ENCODE measurements at regions of chr1 and their contacts with region 1.

Region 1: DNA sequence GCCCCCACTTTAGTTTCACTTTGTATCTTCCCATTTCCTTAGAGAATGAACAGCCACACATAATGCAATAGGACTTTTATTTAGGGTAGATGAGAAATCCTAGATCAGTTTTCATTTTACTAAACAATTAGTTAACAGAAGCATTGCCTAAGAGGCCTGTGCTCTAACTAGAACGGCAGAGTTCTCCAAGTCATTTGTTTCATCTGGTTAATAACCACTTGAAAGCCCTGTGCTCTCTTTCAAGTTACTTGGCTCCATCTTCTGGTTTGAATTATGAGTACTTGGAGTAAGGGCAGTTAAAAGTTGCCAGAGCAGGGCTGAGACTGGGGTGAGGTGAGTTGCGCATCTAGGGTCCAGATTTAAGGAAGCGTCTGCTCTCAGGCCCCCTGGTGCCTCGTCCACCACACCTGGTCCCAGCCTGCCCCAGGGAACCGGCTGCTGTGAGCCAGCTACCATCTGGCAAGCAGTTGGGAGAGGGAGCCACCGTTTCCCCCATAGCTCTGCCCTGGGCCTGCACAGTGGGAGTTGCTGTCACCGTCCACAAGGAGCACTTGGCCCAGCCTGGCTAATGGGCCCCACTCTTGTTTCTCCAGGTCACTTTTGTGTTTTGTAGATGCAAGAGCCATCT is 18.1 kb upstream of the SLC44A3 start:
- DNase-seq: peak; percentile 31 to 86
- H3K4me3 ChIP-seq: no peak overlapping the region
- CTCF ChIP-seq: no peak
- POLR2A ChIP-seq: no peak

Region 2: DNA sequence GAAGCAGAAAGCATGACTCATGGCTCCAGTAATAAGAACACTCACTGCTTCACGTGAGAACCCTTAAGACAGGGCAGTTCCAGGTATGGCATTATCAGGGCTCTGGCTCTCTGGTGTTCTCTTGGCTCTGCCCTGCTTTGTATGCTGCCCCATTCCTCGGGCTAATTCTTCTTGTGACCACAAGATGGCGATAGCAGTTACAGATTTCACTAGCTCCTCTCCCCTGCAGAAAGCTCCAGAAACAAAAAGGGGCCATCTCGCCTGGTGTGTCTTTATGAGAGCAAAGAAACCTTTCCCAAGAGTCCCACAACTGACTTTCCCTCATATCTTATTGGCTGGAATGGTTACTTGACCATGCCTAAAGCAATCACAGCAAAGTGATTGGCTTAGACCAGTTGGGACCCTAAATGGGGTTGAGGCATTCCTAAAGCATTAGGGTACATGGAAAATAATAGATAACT is 320.5 kb before region 1 on chr1:
- intact Hi-C with region 1: loop called (anchors 10 kb)
- DNase-seq: peak; percentile 20 to 71
- H3K4me3 ChIP-seq: no peak overlapping the region
- CTCF ChIP-seq: no peak
- POLR2A ChIP-seq: no peak

Region 3: GRCh38 chr1:94522304-94522703 is 279.7 kb before region 1 on chr1:
- intact Hi-C with region 1: loop called (anchors 10 kb)
- DNase-seq: no peak
- H3K4me3 ChIP-seq: no peak overlapping the region
- CTCF ChIP-seq: no peak
- POLR2A ChIP-seq: no peak

Measured in lower leg skin (tissue), 4 donors.